Psoas muscle (tissue), 8 donors: ENCODE measurements at regions of chr9 and their contacts with region 1.

Region 1: DNA sequence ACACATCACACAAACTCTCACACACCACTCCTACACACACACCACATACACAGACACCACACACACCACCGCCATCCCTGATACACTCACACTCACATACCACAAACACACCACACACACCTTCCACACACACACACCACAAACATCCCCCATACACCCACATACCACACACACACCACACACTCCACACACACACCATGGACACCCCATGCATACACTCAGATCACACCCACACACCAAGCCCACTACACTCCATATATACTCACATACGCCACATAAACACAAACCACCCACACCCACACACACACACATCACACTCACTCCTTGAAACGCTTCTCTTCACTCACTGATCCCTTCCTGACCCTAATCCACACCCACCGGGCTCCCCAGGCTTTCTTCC is 9.1 kb upstream of the ANKRD18A start:
- DNase-seq: no peak
- ATAC-seq: no peak
- H3K4me3 ChIP-seq: no peak overlapping the region
- H3K27ac ChIP-seq: no peak overlapping the region
- H3K4me1 ChIP-seq: no peaks in the 10 kb centered on the region
- H3K27me3 ChIP-seq: peaks cover 0 to 6% (median 3%) of the 10 kb centered on the region in 3 donors
- CTCF ChIP-seq: no peak

Region 2: DNA sequence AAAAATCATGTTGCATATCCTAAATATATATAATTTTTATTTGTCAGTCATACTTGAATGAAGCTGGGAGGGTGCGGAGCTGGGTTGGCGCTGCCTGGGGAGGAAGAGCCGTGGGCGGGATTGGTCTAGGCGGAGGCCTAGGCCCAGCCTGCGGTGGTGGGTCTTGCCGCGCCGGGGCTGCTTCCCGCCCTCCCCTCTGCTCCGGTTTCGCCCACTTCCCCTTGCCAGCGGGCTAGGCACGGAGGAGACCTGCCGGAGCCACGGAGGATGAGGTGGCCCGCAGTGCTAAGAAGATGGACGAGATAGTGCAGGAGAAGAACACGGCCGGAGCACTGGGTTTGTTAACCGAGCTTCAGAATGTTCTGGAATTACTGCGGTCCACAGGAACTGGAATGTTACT is 151.3 kb before region 1 on chr9:
- intact Hi-C with region 1: no loop called
- DNase-seq: no peak
- ATAC-seq: no peak
- H3K4me3 ChIP-seq: no peak overlapping the region
- H3K27ac ChIP-seq: no peak overlapping the region
- H3K4me1 ChIP-seq: no peaks in the 10 kb centered on the region
- H3K27me3 ChIP-seq: peaks cover 0 to 2% (median 0%) of the 10 kb centered on the region in 3 donors
- CTCF ChIP-seq: no peak

Region 3: DNA sequence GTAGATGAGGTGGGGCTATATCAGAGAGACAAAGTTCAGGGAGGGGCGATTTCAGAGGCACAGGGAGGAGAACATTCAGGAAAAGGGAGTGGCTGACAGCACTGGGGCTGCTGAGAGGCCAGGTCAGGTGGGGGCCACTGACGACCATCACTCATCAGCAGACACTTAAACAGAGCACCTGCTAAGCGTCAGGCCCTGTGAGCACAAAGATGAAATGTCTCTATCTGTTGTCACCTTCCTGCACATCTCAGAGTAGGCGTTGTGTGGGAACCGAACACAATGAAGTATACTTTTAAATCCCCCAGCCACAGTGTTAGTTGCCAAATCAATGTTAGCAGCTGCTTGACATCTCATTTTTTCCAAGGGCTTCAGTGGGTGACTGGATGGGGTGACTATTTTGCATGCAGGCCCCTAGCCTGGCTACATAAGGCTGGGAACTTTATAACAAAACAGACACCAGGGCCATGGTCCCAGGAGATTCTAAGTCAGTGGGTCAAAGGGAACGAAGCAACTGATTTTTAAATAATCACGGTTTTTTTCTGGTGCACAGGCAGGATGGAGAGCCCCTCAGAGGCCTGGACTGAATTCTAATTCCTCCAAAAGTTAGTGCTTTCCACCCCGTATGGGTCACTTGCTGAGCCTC is 22.0 kb after region 1 on chr9:
- intact Hi-C with region 1: loop called in 1 of 2 experiments (anchors 2 kb)
- DNase-seq: no peak
- ATAC-seq: no peak
- H3K4me3 ChIP-seq: no peak overlapping the region
- H3K27ac ChIP-seq: no peak overlapping the region
- H3K4me1 ChIP-seq: no peaks in the 10 kb centered on the region
- H3K27me3 ChIP-seq: peaks cover 0 to 4% (median 0%) of the 10 kb centered on the region in 3 donors
- CTCF ChIP-seq: no peak

Region 4: GRCh38 chr9:38662763-38663593 is 33.5 kb after region 1 on chr9:
- intact Hi-C with region 1: no loop called
- DNase-seq: no peak
- ATAC-seq: no peak
- H3K4me3 ChIP-seq: no peak overlapping the region
- H3K27ac ChIP-seq: no peak overlapping the region
- H3K4me1 ChIP-seq: no peaks in the 10 kb centered on the region
- H3K27me3 ChIP-seq: no peaks in the 10 kb centered on the region
- CTCF ChIP-seq: no peak